Activated B cell treated with CpG ODN at 0.5 μM for 24 hours (primary cell): ENCODE measurements at regions of chr2 and their contacts with region 1.

Region 1: DNA sequence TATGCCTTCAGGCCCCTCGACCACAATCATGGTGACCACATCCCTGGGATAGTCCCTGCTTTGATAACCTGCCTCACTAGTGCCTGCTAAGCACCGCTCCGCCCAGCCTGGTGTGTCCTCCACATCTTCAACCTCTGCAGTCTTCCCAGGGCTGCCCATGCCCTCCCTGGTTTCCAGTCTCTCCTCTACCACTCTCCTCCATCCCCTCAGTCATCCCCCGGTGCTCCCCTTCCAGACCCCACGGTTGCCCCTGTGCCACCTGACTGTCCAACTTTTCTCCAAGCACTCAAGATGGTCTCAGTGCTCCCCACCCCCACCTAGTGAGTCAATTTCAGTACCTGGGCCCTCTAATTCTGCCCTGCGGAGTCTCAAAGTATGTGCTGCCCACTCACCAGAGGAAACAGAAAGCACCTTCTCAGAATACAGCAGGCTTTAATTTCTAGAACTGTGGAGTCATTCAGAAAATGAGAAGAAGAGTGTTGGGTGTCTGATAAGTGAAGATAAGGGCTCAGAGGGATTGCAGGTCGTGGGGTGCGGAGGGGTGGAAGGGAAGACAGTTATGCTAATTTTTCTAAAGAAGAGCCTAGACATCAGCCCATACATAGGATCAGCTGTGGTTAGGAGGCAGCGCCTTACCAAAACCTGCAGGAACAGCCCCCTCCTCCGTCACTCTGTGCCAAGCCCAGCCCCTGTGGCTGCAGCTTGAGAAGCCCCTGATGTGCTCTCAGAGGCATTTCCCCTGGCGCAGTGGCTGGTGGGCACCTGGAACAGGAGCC is 53.6 kb upstream of the CAB39 start:
- DNase-seq: no peak
- ATAC-seq: peak; percentile 20
- H3K4me3 Mint-ChIP-seq: peak overlapping the region; percentile 5
- H3K27ac Mint-ChIP-seq: peak overlapping the region; percentile 42
- H3K4me1 Mint-ChIP-seq: peaks cover 74% of the 10 kb centered on the region
- H3K27me3 Mint-ChIP-seq: no peaks in the 10 kb centered on the region
- CTCF ChIP-seq: no peak

Region 2: GRCh38 chr2:230643576-230644291 is 15.3 kb before region 1 on chr2:
- CTCF ChIA-PET with region 1: no interaction called
- POLR2A ChIA-PET with region 1: interaction called, 8 read pairs
- intact Hi-C with region 1: loop called (anchors 2 kb)
- DNase-seq: no peak
- ATAC-seq: peak; percentile 47
- H3K4me3 Mint-ChIP-seq: peak overlapping the region; percentile 16
- H3K27ac Mint-ChIP-seq: peak overlapping the region; percentile 73
- H3K4me1 Mint-ChIP-seq: peaks cover 23% of the 10 kb centered on the region
- H3K27me3 Mint-ChIP-seq: no peaks in the 10 kb centered on the region
- CTCF ChIP-seq: no peak